ENCODE measurements at regions of chr4 and their contacts with region 1.

Region 1: DNA sequence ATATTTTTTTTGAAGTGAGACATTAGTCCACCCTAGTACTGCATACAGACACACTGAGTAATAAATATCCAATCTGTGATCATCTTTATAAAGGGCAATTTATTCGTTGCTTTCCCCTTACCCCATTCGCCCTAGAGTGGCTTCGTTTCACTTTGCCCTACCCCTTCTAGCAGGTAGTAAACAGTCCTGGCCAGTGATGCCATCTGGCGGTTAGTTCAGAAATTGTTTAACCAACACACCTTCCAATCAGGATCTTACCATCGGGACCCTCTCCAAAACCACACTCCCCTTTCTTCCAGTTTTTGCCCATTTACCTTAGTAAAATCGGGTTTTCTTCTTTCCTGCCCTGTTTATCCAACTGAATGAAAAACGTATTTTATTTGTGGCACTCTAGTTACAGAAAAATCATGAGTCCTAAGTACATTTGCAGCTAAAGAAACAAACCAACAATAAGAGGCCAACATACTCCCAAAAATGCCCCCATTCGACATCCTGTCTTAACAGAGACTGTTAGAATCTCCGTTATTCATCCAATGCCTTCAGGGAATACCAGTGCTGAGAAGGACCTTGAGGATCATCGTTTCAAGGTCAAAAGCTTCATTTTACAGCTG is 2.2 kb downstream of the PPA2 start:
- DNase-seq: peak; percentile 60
- H3K4me3 Mint-ChIP-seq: peak overlapping the region; percentile 89
- H3K27ac Mint-ChIP-seq: no peak overlapping the region
- H3K4me1 Mint-ChIP-seq: peaks cover 24% of the 10 kb centered on the region
- H3K27me3 Mint-ChIP-seq: no peaks in the 10 kb centered on the region
- CTCF ChIP-seq: no peak

Region 2: DNA sequence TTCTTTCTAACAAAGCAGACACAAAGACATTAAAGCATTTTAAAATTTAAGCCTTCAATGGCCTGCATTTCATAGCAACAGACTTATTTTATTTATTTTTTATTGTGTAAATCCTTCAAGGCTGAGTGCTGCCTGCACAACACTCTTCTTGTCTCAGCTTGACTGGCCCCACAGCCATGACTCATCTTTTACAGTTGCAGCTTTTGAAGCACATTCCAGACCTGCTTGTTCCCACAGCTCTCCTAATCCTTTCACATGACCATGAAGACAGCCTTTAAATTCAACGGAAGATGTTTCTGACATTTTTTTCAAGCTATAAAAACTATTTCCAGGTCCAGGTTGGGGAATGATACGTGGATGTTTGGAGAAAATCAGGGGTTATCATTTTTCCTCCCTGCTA is 1475.0 kb before region 1 on chr4:
- CTCF ChIA-PET with region 1: interaction called, 7 read pairs
- intact Hi-C with region 1: loop called (anchors 10 kb)
- DNase-seq: peak; percentile 44
- H3K4me3 Mint-ChIP-seq: no peak overlapping the region
- H3K27ac Mint-ChIP-seq: no peak overlapping the region
- H3K4me1 Mint-ChIP-seq: no peaks in the 10 kb centered on the region
- H3K27me3 Mint-ChIP-seq: no peaks in the 10 kb centered on the region
- CTCF ChIP-seq: no peak

Region 3: GRCh38 chr4:104930298-104930697 is 541.4 kb before region 1 on chr4:
- CTCF ChIA-PET with region 1: no interaction called
- intact Hi-C with region 1: loop called (anchors 10 kb)
- DNase-seq: no peak
- H3K4me3 Mint-ChIP-seq: no peak overlapping the region
- H3K27ac Mint-ChIP-seq: no peak overlapping the region
- H3K4me1 Mint-ChIP-seq: peaks cover 44% of the 10 kb centered on the region
- H3K27me3 Mint-ChIP-seq: no peaks in the 10 kb centered on the region
- CTCF ChIP-seq: no peak

Region 4: DNA sequence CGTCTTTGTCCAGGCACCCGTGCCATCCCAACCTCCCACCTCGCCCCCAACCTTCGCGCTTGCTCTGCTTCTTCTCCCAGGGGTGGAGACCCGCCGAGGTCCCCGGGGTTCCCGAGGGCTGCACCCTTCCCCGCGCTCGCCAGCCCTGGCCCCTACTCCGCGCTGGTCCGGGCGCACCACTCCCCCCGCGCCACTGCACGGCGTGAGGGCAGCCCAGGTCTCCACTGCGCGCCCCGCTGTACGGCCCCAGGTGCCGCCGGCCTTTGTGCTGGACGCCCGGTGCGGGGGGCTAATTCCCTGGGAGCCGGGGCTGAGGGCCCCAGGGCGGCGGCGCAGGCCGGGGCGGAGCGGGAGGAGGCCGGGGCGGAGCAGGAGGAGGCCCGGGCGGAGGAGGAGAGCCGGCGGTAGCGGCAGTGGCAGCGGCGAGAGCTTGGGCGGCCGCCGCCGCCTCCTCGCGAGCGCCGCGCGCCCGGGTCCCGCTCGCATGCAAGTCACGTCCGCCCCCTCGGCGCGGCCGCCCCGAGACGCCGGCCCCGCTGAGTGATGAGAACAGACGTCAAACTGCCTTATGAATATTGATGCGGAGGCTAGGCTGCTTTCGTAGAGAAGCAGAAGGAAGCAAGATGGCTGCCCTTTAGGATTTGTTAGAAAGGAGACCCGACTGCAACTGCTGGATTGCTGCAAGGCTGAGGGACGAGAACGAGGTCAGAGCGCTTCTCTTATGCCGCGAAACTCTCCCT is 325.2 kb before region 1 on chr4 and contains the start of gene TET2:
- CTCF ChIA-PET with region 1: no interaction called
- intact Hi-C with region 1: loop called (anchors 5 kb)
- DNase-seq: peak; percentile 69
- H3K4me3 Mint-ChIP-seq: peak within 1 kb of the TSS; percentile 99
- H3K27ac Mint-ChIP-seq: peak within 1 kb of the TSS; percentile 100
- H3K4me1 Mint-ChIP-seq: peaks cover 5% of the 10 kb centered on the region
- H3K27me3 Mint-ChIP-seq: no peaks in the 10 kb centered on the region
- CTCF ChIP-seq: no peak
- total RNA-seq, gene TET2: 19.2 and 20.4 TPM in 2 replicates

Region 5: DNA sequence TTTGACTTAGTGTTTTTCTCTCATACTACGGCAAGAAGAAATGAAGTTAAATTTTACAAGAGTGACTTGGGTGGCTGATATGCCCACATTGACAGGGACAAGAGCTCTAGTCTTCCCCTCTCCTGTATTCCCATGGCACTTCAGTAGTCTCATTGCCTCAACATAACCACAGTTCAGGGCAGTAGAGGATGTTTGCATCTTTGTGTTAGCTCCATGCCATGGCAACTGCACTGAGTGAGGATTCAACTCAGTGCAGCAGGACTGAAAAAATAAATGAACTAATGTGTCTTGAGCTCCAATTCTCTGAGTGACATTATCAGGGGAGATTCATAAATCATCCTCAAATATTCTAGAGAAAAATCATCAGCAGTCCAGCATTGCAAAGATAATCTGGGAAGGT is 246.2 kb before region 1 on chr4:
- CTCF ChIA-PET with region 1: no interaction called
- intact Hi-C with region 1: no loop called
- DNase-seq: no peak
- H3K4me3 Mint-ChIP-seq: no peak overlapping the region
- H3K27ac Mint-ChIP-seq: no peak overlapping the region
- H3K4me1 Mint-ChIP-seq: no peaks in the 10 kb centered on the region
- H3K27me3 Mint-ChIP-seq: no peaks in the 10 kb centered on the region
- CTCF ChIP-seq: no peak

Region 6: DNA sequence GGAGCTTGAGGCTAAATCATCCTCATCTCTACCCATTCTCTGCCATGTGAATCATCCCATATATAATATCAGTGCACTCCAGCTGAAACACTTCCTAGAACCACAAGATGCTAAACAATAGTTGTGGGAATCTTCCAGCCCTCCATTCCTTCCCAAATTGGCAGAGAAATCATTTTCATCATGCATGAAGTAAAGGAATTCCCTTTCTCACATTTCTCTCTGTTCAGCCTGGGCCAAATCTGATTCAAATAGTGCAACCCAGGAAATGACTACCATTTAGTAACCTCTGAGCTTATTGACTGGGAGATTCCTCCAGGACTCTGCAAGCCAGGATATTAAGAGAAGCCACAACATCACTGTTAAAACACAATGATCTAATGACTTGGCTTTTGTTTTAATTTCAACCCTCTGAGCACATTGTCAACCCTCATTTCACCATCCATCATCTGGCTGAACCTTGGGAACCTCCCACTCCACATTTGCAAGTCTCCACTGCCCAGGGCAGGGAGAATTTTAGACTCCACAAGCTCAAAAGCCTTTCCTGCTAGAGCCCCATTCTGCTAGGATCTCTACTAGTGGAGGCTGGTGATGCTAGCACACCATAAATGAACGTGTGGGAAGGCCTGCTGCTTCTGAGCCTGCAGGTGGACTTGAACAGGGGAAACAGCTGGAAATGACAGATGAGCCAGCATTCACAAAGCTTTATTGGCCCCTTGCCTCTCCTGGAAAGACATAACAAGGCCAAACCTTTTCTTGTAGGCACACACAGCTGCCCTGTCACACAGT is 191.1 kb before region 1 on chr4:
- CTCF ChIA-PET with region 1: no interaction called
- intact Hi-C with region 1: no loop called
- DNase-seq: no peak
- H3K4me3 Mint-ChIP-seq: no peak overlapping the region
- H3K27ac Mint-ChIP-seq: no peak overlapping the region
- H3K4me1 Mint-ChIP-seq: no peaks in the 10 kb centered on the region
- H3K27me3 Mint-ChIP-seq: no peaks in the 10 kb centered on the region
- CTCF ChIP-seq: no peak

Region 7: DNA sequence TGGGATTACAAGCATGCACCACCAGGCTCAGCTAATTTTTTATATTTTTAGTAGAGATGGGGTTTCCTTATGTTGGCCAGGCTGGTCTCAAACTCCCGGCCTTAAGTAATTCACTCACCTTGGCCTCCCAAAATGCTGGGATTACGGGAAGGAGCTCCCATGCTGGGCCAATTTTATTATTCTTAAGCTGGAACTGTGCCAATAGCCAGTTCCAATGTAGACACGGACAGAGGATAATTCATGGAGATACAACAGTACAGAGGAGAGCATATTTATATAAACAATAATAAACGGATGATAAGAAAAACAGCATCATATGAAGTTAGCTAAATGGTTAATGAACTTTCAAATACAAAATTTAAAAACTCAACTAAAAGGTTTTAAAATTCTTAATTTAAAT is 85.7 kb before region 1 on chr4:
- CTCF ChIA-PET with region 1: no interaction called
- intact Hi-C with region 1: no loop called
- DNase-seq: no peak
- H3K4me3 Mint-ChIP-seq: no peak overlapping the region
- H3K27ac Mint-ChIP-seq: no peak overlapping the region
- H3K4me1 Mint-ChIP-seq: no peaks in the 10 kb centered on the region
- H3K27me3 Mint-ChIP-seq: no peaks in the 10 kb centered on the region
- CTCF ChIP-seq: no peak

Region 8: GRCh38 chr4:105483840-105484239 is 12.2 kb after region 1 on chr4:
- CTCF ChIA-PET with region 1: interaction called, 11 read pairs
- intact Hi-C with region 1: no loop called
- DNase-seq: no peak
- H3K4me3 Mint-ChIP-seq: no peak overlapping the region
- H3K27ac Mint-ChIP-seq: no peak overlapping the region
- H3K4me1 Mint-ChIP-seq: no peaks in the 10 kb centered on the region
- H3K27me3 Mint-ChIP-seq: no peaks in the 10 kb centered on the region
- CTCF ChIP-seq: no peak

Region 9: GRCh38 chr4:105751718-105752299 is 280.1 kb after region 1 on chr4:
- CTCF ChIA-PET with region 1: no interaction called
- intact Hi-C with region 1: no loop called
- DNase-seq: no peak
- H3K4me3 Mint-ChIP-seq: no peak overlapping the region
- H3K27ac Mint-ChIP-seq: no peak overlapping the region
- H3K4me1 Mint-ChIP-seq: no peaks in the 10 kb centered on the region
- H3K27me3 Mint-ChIP-seq: no peaks in the 10 kb centered on the region
- CTCF ChIP-seq: no peak